Heart right ventricle (tissue), 16 donors: ENCODE measurements at regions of chr2 and their contacts with region 1.

Region 1: GRCh38 chr2:199861132-199861774 is 10.3 kb upstream of the FTCDNL1 start:
- DNase-seq: no peak
- ATAC-seq: no peak
- H3K4me3 ChIP-seq: no peak overlapping the region
- H3K27ac ChIP-seq: no peak overlapping the region
- H3K4me1 ChIP-seq: no peaks in the 10 kb centered on the region
- H3K27me3 ChIP-seq: peaks cover 0 to 20% (median 0%) of the 10 kb centered on the region in 7 donors
- CTCF ChIP-seq: peak in 8 of 9 donors; percentile 15 to 65 (median 56)

Region 2: DNA sequence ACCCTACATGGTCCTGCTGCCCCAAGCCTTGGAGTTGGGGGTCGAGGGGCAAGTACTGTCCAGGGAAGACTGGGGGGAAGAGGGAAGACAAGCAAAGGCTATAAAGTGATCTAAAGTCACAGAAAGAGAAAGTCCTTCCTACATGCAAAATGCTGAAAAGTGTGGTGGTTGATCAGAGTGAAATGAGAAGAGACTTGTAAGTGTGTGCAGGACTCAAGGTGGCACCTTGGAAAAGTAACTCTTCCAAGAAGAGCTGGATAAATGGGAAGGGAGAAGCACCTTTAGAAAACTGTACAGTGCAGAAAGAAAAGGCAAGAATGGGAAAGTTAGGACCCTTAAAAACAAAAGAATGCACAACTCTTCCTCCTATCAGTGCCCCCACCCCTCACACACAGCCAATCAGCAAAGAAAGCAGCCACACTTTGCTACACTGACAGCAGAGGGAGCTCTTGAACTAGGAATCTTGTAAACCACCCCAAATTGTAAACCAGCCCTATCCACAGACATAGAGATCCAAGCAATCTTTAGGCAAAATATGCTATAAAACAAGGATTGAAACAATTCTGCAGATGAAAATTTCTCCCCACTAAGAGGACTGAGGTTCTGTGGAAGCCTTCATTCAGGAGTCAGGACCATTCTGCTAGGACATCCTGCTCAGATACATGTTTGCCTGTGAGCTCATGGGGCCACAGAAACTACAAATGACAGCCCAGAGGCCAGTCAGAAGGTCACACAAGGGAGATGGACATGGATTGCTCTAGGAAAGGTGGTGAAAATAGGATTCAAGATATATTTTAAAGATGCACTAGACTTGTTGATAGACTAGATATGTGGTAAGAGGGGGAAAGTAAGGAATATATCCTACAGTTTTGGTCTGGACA is 156.7 kb before region 1 on chr2:
- intact Hi-C with region 1: loop called in 3 of 10 experiments (anchors 10 kb)
- DNase-seq: peak in 1 of 2 donors; percentile 5
- ATAC-seq: peak in 3 of 8 donors; percentile 46 to 70 (median 63)
- H3K4me3 ChIP-seq: no peak overlapping the region
- H3K27ac ChIP-seq: no peak overlapping the region
- H3K4me1 ChIP-seq: no peaks in the 10 kb centered on the region
- H3K27me3 ChIP-seq: no peaks in the 10 kb centered on the region
- CTCF ChIP-seq: peak in 7 of 9 donors; percentile 33 to 54 (median 47)

Region 3: DNA sequence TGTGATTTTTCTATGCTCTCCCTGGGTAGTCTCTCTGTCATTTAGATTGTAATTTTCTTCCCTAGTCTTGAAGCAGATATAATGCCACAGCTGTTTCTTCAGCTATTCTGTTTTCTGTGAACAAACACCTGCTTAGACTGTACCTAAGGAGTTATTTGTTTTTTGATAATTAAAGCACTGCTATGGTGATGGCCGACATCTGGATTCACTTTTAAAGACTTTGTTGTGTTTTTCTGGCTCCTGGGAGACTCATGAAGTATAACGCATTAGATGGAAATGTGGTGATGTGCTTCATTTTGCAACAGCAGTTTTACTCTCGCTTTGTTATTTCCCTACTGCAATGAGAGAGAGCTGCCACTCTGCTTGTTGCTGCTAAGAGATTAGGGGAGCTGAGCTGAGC is 34.2 kb after region 1 on chr2:
- intact Hi-C with region 1: no loop called
- DNase-seq: no peak
- ATAC-seq: no peak
- H3K4me3 ChIP-seq: no peak overlapping the region
- H3K27ac ChIP-seq: no peak overlapping the region
- H3K4me1 ChIP-seq: no peaks in the 10 kb centered on the region
- H3K27me3 ChIP-seq: no peaks in the 10 kb centered on the region
- CTCF ChIP-seq: no peak